Activated CD8-positive, alpha-beta memory T cell treated with anti-CD3 and anti-CD28 coated beads, Interleukin-2, amount 10 ng/mL, durations not matched to agents 7 days and 5 days (primary cell): ENCODE measurements at regions of chr3 and their contacts with region 1.

Region 1: DNA sequence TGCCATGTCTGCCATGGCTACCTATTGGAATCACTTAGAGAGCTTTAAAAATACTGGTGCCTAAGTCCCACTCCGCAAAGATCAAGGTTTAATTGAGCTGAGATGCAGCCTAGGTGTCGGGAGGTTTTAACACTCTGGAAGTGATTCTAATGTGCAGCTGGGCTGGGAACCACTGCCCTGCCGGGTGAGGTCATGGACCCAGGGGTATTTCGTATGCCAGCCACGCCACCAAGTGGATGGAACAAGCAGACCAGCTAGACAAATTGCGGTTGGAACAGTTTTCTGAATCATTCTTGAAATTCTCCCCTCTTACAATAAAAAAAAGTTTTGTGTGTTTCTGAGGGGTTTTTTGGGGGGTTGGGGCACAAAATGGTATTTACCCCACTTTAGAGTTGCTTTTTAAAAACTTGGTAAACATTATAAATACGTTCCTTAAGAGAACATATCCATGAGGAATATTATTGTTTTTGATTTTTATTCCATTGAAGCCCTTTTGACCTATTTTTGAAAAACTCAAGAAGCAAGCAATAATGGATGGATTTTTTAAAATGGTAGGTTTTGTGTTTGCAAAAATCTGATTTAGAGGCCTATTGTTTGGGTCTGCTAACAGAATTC is 66.2 kb upstream of the CSTA start:
- DNase-seq: peak; percentile 84
- ATAC-seq: peak; percentile 94
- H3K4me3 Mint-ChIP-seq: no peak overlapping the region
- H3K27ac Mint-ChIP-seq: no peak overlapping the region
- H3K4me1 Mint-ChIP-seq: peaks cover 19% of the 10 kb centered on the region
- H3K27me3 Mint-ChIP-seq: peaks cover 20% of the 10 kb centered on the region

Region 2: DNA sequence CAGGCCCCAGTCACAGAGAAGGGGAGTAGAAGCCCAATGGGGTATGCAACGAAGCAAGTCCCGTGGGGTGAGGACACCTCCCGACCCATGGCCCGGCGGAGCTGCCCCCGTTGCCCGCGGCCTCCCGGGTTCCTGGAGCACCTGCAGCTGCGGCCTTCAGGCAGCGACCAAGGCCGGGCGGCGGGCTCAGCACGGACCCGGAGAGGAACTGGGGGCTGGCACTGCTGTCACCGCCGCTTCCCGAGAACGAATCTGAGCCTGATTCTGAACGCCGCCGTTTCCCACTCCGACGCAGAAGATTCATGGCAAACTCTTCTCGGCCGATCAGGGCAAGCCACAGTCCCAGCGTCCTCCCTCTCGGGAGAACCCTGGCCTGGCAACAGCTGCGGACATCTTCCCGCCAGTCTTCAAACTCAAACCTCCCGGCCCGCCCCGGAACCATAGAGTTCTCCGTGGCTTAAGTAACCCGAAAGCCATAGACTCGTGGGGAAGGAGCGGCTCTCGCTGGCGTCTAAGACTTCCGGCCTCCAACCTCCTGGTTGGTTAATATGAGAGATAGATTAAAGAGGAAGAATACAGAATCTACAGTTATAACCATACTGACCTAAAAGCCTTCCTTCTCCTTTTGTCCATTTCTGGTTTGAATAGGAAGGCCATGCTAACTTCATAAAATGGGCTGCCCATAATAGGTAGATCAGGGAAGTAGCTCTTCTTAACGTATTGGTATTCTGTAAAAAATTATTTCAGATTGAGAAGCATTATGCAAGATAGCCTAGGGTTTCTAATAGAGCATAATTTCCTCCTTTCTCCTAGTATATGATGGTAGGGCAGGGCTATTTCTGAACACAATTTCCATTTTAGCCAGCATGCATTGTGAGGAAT is 713.0 kb before region 1 on chr3 and contains the start of gene POLQ:
- CTCF ChIA-PET with region 1: interaction called, 21 read pairs
- DNase-seq: peak; percentile 95
- ATAC-seq: peak; percentile 95
- H3K4me3 Mint-ChIP-seq: peak within 1 kb of the TSS; percentile 95
- H3K27ac Mint-ChIP-seq: peak within 1 kb of the TSS; percentile 95
- H3K4me1 Mint-ChIP-seq: peaks cover 34% of the 10 kb centered on the region
- H3K27me3 Mint-ChIP-seq: no peaks in the 10 kb centered on the region
- total RNA-seq, gene POLQ: 34.3 to 55.8 TPM

Region 3: GRCh38 chr3:121883507-121883906 is 375.4 kb before region 1 on chr3:
- CTCF ChIA-PET with region 1: interaction called, 10 read pairs
- DNase-seq: no peak
- ATAC-seq: peak; percentile 58
- H3K4me3 Mint-ChIP-seq: no peak overlapping the region
- H3K27ac Mint-ChIP-seq: no peak overlapping the region
- H3K4me1 Mint-ChIP-seq: peaks cover 8% of the 10 kb centered on the region
- H3K27me3 Mint-ChIP-seq: no peaks in the 10 kb centered on the region

Region 4: GRCh38 chr3:122183521-122183892 is 75.4 kb before region 1 on chr3 and contains the start of gene CASR:
- CTCF ChIA-PET with region 1: no interaction called
- DNase-seq: no peak
- ATAC-seq: no peak
- H3K4me3 Mint-ChIP-seq: peak within 1 kb of the TSS; percentile 29
- H3K27ac Mint-ChIP-seq: no peak within 1 kb of the TSS
- H3K4me1 Mint-ChIP-seq: peaks cover 6% of the 10 kb centered on the region
- H3K27me3 Mint-ChIP-seq: peaks cover 81% of the 10 kb centered on the region
- total RNA-seq, gene CASR: not detected

Region 5: GRCh38 chr3:122245513-122246174 is 13.2 kb before region 1 on chr3:
- CTCF ChIA-PET with region 1: interaction called, 11 read pairs
- DNase-seq: no peak
- ATAC-seq: peak; percentile 36
- H3K4me3 Mint-ChIP-seq: peak overlapping the region; percentile 75
- H3K27ac Mint-ChIP-seq: peak overlapping the region; percentile 89
- H3K4me1 Mint-ChIP-seq: peaks cover 18% of the 10 kb centered on the region
- H3K27me3 Mint-ChIP-seq: peaks cover 33% of the 10 kb centered on the region

Region 6: DNA sequence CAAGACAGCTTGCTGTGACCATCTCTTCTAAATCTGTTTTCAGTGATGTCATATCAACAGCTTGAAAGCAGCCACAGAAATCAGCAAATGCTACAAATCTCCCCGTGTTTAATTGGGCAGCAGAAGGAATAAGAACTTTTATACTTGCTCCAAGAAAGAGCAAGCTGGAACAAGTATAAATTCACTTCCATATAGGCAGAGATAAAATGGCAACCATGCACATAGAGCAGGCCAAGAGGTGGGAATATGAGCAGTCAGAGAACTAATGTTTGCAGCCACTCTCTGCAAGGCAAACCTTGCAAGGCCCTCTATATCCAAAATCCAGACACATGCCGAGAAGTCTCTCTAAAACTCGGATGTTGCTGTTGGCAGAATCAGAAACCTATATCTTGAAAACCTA is 289.2 kb after region 1 on chr3:
- CTCF ChIA-PET with region 1: no interaction called
- DNase-seq: no peak
- ATAC-seq: no peak
- H3K4me3 Mint-ChIP-seq: no peak overlapping the region
- H3K27ac Mint-ChIP-seq: peak overlapping the region; percentile 14
- H3K4me1 Mint-ChIP-seq: peaks cover 18% of the 10 kb centered on the region
- H3K27me3 Mint-ChIP-seq: no peaks in the 10 kb centered on the region